ENCODE measurements at regions of chr2 and their contacts with region 1.

Region 1: GRCh38 chr2:173965329-173966025 is at the start of gene SP3:
- DNase-seq: peak; percentile 80
- ATAC-seq: peak; percentile 88
- H3K4me3 ChIP-seq: peak within 1 kb of the TSS; percentile 94
- H3K27ac ChIP-seq: peak within 1 kb of the TSS; percentile 97
- H3K4me1 ChIP-seq: no peaks in the 10 kb centered on the region; the same call in 1 of the 2 replicates
- H3K27me3 ChIP-seq: no peaks in the 10 kb centered on the region
- CTCF ChIP-seq: no peak
- EP300 ChIP-seq: no peak; a peak in 1 of 4 replicates
- POLR2A ChIP-seq: peak; percentile 88
- RAD21 ChIP-seq: no peak
- polyA plus RNA-seq, gene SP3: 9.9 to 12.2 TPM

Region 2: GRCh38 chr2:173741759-173742158 is 223.7 kb before region 1 on chr2:
- CTCF ChIA-PET with region 1: no interaction called
- POLR2A ChIA-PET with region 1: no interaction called
- RAD21 ChIA-PET with region 1: no interaction called
- SMC1A ChIA-PET with region 1: no interaction called
- in situ Hi-C with region 1: no loop called
- intact Hi-C with region 1: no loop called
- DNase-seq: no peak
- ATAC-seq: no peak
- H3K4me3 ChIP-seq: no peak overlapping the region
- H3K27ac ChIP-seq: no peak overlapping the region
- H3K4me1 ChIP-seq: no peaks in the 10 kb centered on the region
- H3K27me3 ChIP-seq: peaks cover 0 to 1% of the 10 kb centered on the region in 2 experiments; a peak in 2 of 4 replicates
- CTCF ChIP-seq: no peak
- EP300 ChIP-seq: no peak
- POLR2A ChIP-seq: no peak
- RAD21 ChIP-seq: no peak

Region 3: GRCh38 chr2:173898178-173898668 is 67.3 kb before region 1 on chr2:
- CTCF ChIA-PET with region 1: interaction called, 3 read pairs
- POLR2A ChIA-PET with region 1: interaction called, 3 read pairs
- RAD21 ChIA-PET with region 1: interaction called, 4 read pairs
- SMC1A ChIA-PET with region 1: interaction called, 8 read pairs
- in situ Hi-C with region 1: no loop called
- intact Hi-C with region 1: loop called (anchors 2 kb)
- DNase-seq: peak; percentile 94
- ATAC-seq: peak; percentile 94
- H3K4me3 ChIP-seq: peak overlapping the region; percentile 17; the same call in 1 of the 2 replicates
- H3K27ac ChIP-seq: peak overlapping the region; percentile 78
- H3K4me1 ChIP-seq: peaks cover 40% of the 10 kb centered on the region
- H3K27me3 ChIP-seq: no peaks in the 10 kb centered on the region
- CTCF ChIP-seq: no peak
- EP300 ChIP-seq: peak; percentile 57 to 94; a peak in 3 of 4 replicates
- POLR2A ChIP-seq: no peak
- RAD21 ChIP-seq: no peak

Region 4: DNA sequence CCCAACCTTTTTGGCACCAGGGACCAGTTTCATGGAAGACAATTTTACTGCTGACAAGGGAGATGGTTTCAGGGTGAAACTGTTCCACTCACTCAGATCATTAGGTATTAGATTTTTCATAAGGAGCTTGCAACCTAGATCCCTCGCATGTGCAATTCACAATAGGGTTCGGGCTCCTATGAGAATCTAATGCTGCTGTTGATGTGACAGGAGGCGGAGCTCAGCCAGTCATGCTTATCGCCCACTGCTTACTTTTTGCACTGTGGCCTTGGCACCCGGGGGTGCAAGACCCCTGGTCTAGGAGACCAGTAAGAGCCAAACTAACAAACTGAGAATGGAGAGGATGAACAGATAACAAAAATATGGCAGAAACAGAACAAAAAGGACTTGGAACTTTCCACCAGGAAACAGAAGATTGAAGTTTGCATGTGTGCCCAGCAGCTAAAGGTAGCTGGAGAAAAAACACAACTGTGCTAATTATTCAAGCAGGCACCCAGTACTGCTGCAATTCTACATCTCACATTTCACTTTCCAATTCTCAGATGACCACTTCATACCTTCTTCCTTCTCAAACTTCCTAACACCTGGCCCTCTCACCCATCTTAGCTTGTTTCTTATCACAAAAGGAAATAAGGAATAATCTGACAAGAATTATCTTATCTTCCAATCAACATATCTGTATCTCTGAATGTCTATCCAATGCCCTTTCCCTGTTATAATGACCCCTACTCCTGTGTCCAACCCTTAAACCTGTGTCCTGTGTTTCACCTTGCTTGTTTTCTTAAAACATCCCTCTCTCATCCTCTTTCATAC is 25.1 kb before region 1 on chr2:
- CTCF ChIA-PET with region 1: interaction called, 4 read pairs
- POLR2A ChIA-PET with region 1: interaction called, 12 read pairs
- RAD21 ChIA-PET with region 1: interaction called, 5 read pairs
- SMC1A ChIA-PET with region 1: interaction called, 11 read pairs
- in situ Hi-C with region 1: no loop called
- intact Hi-C with region 1: no loop called
- DNase-seq: no peak
- ATAC-seq: peak; percentile 49
- H3K4me3 ChIP-seq: 0 out of 2 replicates have a peak overlapping the region, but pooled peaks have one; percentile 2
- H3K27ac ChIP-seq: peak overlapping the region; percentile 29
- H3K4me1 ChIP-seq: peaks cover 20% of the 10 kb centered on the region
- H3K27me3 ChIP-seq: no peaks in the 10 kb centered on the region
- CTCF ChIP-seq: no peak
- EP300 ChIP-seq: no peak
- POLR2A ChIP-seq: no peak
- RAD21 ChIP-seq: no peak

Region 5: GRCh38 chr2:173955004-173955403 is 10.5 kb before region 1 on chr2:
- CTCF ChIA-PET with region 1: interaction called, 11 read pairs
- POLR2A ChIA-PET with region 1: interaction called, 5 read pairs
- RAD21 ChIA-PET with region 1: no interaction called
- SMC1A ChIA-PET with region 1: interaction called, 4 read pairs
- in situ Hi-C with region 1: no loop called
- intact Hi-C with region 1: no loop called
- DNase-seq: no peak
- ATAC-seq: peak; percentile 7
- H3K4me3 ChIP-seq: no peak overlapping the region; the same call in 1 of the 2 replicates
- H3K27ac ChIP-seq: no peak overlapping the region
- H3K4me1 ChIP-seq: 0 out of 2 replicates have a peak, but pooled peaks cover 3% of the 10 kb centered on the region
- H3K27me3 ChIP-seq: no peaks in the 10 kb centered on the region
- CTCF ChIP-seq: 0 out of 6 replicates have a peak, but pooled peaks of 1 of the 3 experiments have one; percentile 9
- EP300 ChIP-seq: no peak
- POLR2A ChIP-seq: no peak
- RAD21 ChIP-seq: 0 out of 2 replicates have a peak, but pooled peaks have one; percentile 17

Region 6: DNA sequence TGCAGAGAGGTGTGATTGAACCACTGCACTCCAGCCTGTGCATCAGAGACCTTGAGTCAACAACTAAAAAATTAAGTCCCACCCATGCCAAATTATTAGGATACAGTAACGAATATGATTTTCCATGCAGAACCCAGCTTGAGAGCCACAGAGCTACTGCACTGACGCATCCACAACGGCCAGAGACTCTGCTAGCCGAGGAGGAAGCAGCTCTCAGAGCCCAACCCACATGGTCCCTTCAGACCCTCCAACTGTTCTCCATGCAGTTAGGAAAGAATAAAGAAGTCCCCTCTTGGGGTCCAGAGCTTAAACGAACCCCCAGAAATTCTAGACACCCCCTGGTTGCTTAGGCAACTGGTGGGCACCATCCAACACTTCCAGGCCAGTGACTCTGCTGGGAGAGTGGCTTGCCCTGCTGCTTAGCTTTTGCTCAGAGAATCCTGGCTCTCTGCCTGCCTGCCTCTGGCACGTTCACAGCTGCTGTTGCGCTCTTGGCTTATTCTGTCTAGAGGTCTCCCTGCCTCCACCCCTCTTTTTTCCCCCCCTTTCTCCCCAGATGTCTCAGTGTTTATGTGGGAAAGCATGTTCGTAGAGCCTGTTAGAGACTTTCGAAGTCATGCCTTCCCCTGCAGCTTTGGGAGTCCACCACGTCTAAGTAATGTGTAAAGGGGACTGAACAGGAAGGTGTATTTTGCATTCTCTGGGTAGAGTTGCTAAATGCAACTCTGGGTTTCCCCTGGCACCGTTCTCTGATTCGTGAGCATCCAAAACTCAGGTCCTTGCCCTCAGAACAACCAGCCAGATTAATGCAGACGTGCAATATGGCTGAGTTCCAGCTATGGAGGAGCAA is 25.7 kb after region 1 on chr2:
- CTCF ChIA-PET with region 1: no interaction called
- POLR2A ChIA-PET with region 1: no interaction called
- RAD21 ChIA-PET with region 1: no interaction called
- SMC1A ChIA-PET with region 1: no interaction called
- in situ Hi-C with region 1: no loop called
- intact Hi-C with region 1: no loop called
- DNase-seq: peak; percentile 87
- ATAC-seq: peak; percentile 86
- H3K4me3 ChIP-seq: peak overlapping the region; percentile 13; the same call in 1 of the 2 replicates
- H3K27ac ChIP-seq: peak overlapping the region; percentile 45
- H3K4me1 ChIP-seq: peaks cover 38% of the 10 kb centered on the region
- H3K27me3 ChIP-seq: no peaks in the 10 kb centered on the region
- CTCF ChIP-seq: no peak
- EP300 ChIP-seq: no peak
- POLR2A ChIP-seq: no peak
- RAD21 ChIP-seq: no peak

Region 7: DNA sequence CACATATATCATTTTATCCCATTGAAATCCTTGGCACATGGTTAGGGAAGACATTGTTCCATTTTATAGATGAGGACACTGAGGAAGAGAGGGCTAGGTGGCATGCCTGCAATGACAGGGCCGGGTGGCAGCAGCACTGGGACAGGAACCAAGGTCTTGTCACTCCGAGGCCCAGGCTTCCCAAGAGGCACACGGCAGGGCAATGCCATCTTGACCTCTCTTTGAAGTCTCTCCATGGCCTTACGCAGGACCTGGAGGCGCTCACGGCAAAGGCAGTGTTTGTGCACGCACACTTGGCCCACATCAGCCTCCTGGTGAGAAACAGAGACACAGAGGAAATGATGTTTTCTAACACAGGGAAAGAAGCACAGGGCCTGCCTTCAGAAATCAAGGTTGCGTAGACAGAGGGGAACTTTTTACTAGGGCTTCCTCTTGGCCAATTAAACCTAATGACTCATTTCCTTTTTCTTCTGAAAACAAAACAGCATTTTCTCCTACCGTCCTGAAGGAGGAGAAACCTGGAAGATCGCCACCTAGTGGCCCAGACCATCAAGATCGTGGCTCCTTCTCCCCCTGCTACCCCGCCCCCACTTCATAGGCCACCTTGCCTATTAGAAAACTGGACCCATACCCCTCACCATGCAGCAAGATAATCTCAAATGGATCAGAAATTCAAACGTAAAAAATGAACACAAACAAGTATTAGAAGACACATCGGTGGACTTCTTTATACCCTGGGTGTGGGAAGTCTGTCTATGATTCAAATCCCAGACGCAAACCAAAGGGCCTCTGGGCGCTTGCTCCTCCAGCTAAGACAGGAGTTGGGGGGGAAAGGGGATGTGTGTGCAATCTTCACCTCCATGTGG is 74.3 kb after region 1 on chr2:
- CTCF ChIA-PET with region 1: no interaction called
- POLR2A ChIA-PET with region 1: no interaction called
- RAD21 ChIA-PET with region 1: no interaction called
- SMC1A ChIA-PET with region 1: interaction called, 3 read pairs
- in situ Hi-C with region 1: no loop called
- intact Hi-C with region 1: loop called (anchors 1 kb)
- DNase-seq: peak; percentile 84
- ATAC-seq: peak; percentile 93
- H3K4me3 ChIP-seq: no peak overlapping the region
- H3K27ac ChIP-seq: peak overlapping the region; percentile 62
- H3K4me1 ChIP-seq: peaks cover 42% of the 10 kb centered on the region
- H3K27me3 ChIP-seq: no peaks in the 10 kb centered on the region
- CTCF ChIP-seq: peak; percentile 82 to 88 (median 85)
- EP300 ChIP-seq: peak in 1 of 2 experiments; percentile 48; a peak in 1 of 4 replicates
- POLR2A ChIP-seq: no peak
- RAD21 ChIP-seq: peak; percentile 79

Region 8: GRCh38 chr2:174248187-174248997 is 282.9 kb after region 1 on chr2 and contains the start of gene OLA1:
- CTCF ChIA-PET with region 1: no interaction called
- POLR2A ChIA-PET with region 1: interaction called, 3 read pairs
- RAD21 ChIA-PET with region 1: no interaction called
- SMC1A ChIA-PET with region 1: no interaction called
- in situ Hi-C with region 1: no loop called
- intact Hi-C with region 1: loop called (anchors 10 kb)
- DNase-seq: peak; percentile 75
- ATAC-seq: peak; percentile 98
- H3K4me3 ChIP-seq: peak within 1 kb of the TSS; percentile 82
- H3K27ac ChIP-seq: peak within 1 kb of the TSS; percentile 87
- H3K4me1 ChIP-seq: peaks cover 6% of the 10 kb centered on the region
- H3K27me3 ChIP-seq: no peaks in the 10 kb centered on the region
- CTCF ChIP-seq: no peak
- EP300 ChIP-seq: peak in 1 of 2 experiments; percentile 4; a peak in 1 of 4 replicates
- POLR2A ChIP-seq: peak; percentile 95
- RAD21 ChIP-seq: no peak
- polyA plus RNA-seq, gene OLA1: 131 to 141 TPM

Region 9: GRCh38 chr2:174593574-174594203 is 628.2 kb after region 1 on chr2:
- CTCF ChIA-PET with region 1: no interaction called
- POLR2A ChIA-PET with region 1: no interaction called
- RAD21 ChIA-PET with region 1: no interaction called
- SMC1A ChIA-PET with region 1: no interaction called
- in situ Hi-C with region 1: no loop called
- intact Hi-C with region 1: loop called (anchors 10 kb)
- DNase-seq: peak; percentile 90
- ATAC-seq: peak; percentile 65
- H3K4me3 ChIP-seq: peak overlapping the region; percentile 58
- H3K27ac ChIP-seq: peak overlapping the region; percentile 95
- H3K4me1 ChIP-seq: peaks cover 20% of the 10 kb centered on the region
- H3K27me3 ChIP-seq: no peaks in the 10 kb centered on the region
- CTCF ChIP-seq: no peak
- EP300 ChIP-seq: peak; percentile 88 to 96
- POLR2A ChIP-seq: peak; percentile 53
- RAD21 ChIP-seq: no peak

Measured in GM12878 (cell line).